Right ventricle myocardium inferior (tissue), 1 donor: ENCODE measurements at regions of chr3 and their contacts with region 1.

Region 1: DNA sequence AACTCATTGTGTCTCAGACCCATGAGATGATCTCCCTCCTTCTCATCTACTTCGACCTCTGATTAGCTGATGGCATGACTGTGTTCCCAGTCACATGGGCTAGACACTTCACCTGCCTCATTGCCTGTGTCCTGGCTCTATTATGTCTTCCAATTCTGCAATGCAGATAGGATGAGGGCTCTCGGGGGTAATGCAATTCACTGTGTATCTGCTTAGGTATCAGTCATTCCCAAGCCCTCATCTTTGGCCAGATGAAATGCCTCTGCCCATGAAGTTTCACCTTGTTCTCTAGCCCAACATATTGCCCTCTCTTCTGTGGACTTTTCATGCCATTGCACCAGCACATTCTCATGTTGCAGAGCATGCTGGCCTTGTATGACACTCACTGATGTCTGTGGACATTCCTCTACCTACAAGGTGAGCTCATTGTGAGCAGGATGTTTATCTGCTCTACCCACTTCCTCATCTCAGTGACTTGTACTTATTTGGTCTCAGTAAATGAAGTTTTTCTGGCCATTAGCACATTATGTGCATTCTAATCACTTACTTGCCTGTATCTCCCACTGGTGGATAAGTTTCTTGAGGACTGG is 32.3 kb downstream of the MOBP start:
- DNase-seq: no peak
- ATAC-seq: no peak

Region 2: DNA sequence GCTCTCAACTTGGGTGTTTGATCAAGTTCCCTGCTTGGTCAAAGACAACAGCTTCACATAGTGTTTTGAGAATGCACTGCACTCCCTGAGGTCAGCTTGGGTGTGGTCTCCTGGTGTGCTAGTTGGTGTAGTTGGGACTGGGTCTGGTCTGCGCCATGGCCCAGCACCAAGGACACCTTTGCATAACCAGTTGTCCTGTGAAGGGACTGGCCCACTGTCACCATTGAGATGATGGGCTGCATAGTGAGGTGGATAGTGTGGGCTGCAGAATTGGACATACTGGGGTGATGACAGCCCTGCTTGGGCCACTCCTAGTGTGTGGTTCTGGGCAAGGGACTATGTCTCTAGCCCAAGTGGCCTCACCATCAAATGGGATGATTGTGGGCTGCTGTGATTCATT is 83.8 kb before region 1 on chr3:
- intact Hi-C with region 1: loop called (anchors 2 kb)
- DNase-seq: no peak
- ATAC-seq: no peak

Region 3: GRCh38 chr3:39447637-39448483 is 51.9 kb before region 1 on chr3:
- intact Hi-C with region 1: loop called (anchors 2 kb)
- DNase-seq: no peak
- ATAC-seq: peak; percentile 85